Activated CD4-positive, alpha-beta T cell treated with anti-CD3 and anti-CD28 coated beads for 36 hours (primary cell): ENCODE measurements at regions of chr11 and their contacts with region 1.

Region 1: GRCh38 chr11:35040221-35040942 is 98.6 kb upstream of the CD44 start:
- DNase-seq: peak; percentile 78
- ATAC-seq: peak; percentile 86
- H3K4me3 Mint-ChIP-seq: peak overlapping the region; percentile 79
- H3K27ac Mint-ChIP-seq: peak overlapping the region; percentile 98
- H3K4me1 Mint-ChIP-seq: peaks cover 80% of the 10 kb centered on the region
- H3K27me3 Mint-ChIP-seq: peaks cover 2% of the 10 kb centered on the region

Region 2: DNA sequence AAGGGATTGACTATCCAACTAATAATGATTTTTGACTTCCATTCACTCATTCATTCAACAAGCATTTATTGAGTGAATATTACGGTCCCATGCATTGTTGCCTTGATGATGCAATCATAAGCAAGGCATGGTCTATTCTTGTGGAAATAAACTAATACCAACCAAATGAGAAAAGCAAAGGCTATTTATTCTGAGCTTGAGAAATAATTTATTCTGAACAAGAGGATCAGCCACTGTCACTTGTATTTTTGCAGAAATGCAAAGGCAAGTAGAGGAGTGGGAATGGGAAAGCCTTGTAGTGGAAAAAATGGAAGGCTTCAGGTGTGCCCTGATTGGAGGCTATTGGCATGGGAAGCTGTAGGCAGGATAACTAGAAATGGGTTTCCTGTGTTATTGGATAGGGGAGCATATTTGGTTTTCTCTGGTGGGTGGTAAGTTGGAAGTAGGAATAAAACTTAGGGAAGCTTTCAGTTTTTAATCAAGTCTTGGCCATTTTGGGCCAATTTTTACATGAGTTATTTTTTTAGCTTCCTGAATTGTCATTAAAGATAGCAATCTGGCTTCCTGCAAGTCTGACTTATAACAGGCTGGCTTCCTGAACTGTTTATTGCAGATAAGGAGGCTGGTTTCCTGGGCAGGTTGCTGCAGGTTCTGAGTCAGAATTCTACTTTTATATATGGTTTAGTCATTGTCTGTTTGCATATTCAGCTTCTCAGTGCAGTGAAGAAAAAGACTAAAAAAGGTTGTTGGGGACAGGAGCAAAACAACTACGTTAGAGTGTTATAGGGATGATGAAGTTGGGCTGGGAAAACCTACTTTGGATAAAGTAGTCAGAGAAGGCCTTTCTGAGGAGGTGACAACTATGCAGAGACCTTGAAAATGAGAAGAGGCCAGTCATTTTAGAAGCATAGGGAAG is 230.9 kb before region 1 on chr11:
- CTCF ChIA-PET with region 1: no interaction called
- POLR2A ChIA-PET with region 1: no interaction called
- intact Hi-C with region 1: no loop called
- DNase-seq: peak; percentile 10
- ATAC-seq: peak; percentile 33
- H3K4me3 Mint-ChIP-seq: no peak overlapping the region
- H3K27ac Mint-ChIP-seq: no peak overlapping the region
- H3K4me1 Mint-ChIP-seq: peaks cover 7% of the 10 kb centered on the region
- H3K27me3 Mint-ChIP-seq: peaks cover 37% of the 10 kb centered on the region

Region 3: DNA sequence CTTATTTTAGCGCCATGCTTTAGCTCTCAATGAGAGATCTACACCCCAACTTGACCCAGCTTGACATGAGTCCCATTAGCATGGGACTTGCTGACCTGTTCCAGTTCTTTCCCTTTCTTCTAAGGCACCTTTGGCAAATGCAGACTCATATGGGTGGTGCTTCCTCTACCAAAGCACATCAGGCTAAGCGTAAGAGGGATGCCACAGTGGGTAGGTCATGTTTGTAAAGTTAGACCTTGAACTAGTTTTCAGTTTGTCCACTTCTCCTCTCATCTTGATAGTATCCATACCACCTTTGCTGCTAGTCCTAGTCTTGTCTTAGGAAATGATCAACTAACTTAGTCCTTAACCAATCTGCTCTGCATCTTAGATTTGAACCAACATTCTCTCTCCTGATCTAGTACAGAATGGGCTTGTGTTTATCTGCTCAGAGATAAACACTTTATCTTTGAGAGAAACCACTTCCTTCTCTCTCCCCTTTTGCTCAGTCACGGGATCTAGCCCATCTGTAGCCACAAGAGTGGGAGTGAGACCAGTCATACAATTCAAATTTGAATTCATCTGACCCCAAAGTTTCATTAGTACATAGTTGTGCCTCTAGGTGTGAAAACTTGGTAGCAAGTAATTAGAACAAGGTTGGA is 26.5 kb after region 1 on chr11:
- CTCF ChIA-PET with region 1: interaction called, 3 read pairs
- POLR2A ChIA-PET with region 1: interaction called, 3 read pairs
- intact Hi-C with region 1: loop called in 1 of 2 experiments (anchors 2 kb)
- DNase-seq: peak; percentile 61
- ATAC-seq: peak; percentile 85
- H3K4me3 Mint-ChIP-seq: peak overlapping the region; percentile 15
- H3K27ac Mint-ChIP-seq: peak overlapping the region; percentile 73
- H3K4me1 Mint-ChIP-seq: peaks cover 32% of the 10 kb centered on the region
- H3K27me3 Mint-ChIP-seq: peaks cover 3% of the 10 kb centered on the region

Region 4: GRCh38 chr11:35126000-35126878 is 85.9 kb after region 1 on chr11:
- CTCF ChIA-PET with region 1: interaction called, 4 read pairs
- POLR2A ChIA-PET with region 1: no interaction called
- intact Hi-C with region 1: loop called in 1 of 2 experiments (anchors 1 kb)
- DNase-seq: peak; percentile 76
- ATAC-seq: peak; percentile 82
- H3K4me3 Mint-ChIP-seq: peak overlapping the region; percentile 58
- H3K27ac Mint-ChIP-seq: peak overlapping the region; percentile 92
- H3K4me1 Mint-ChIP-seq: peaks cover 69% of the 10 kb centered on the region
- H3K27me3 Mint-ChIP-seq: no peaks in the 10 kb centered on the region

Region 5: DNA sequence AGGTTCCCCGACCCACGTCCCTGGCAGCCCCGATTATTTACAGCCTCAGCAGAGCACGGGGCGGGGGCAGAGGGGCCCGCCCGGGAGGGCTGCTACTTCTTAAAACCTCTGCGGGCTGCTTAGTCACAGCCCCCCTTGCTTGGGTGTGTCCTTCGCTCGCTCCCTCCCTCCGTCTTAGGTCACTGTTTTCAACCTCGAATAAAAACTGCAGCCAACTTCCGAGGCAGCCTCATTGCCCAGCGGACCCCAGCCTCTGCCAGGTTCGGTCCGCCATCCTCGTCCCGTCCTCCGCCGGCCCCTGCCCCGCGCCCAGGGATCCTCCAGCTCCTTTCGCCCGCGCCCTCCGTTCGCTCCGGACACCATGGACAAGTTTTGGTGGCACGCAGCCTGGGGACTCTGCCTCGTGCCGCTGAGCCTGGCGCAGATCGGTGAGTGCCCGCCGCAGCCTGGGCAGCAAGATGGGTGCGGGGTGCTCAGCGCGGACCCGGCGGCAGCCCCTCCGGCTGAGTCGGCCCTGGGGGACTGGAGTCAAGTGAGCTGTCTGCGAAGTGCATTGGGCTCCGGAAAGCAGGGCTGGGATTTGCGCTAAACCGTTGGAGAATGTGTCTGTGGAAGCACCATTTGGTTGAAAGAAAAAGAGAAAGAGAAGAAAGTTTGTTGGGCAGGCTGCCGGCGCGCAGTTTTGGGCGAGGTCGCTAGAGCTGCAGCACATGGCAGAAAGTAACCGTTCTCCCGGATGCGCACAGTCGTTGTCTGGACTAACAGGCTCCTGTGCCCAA is 98.8 kb after region 1 on chr11 and contains the start of gene CD44:
- CTCF ChIA-PET with region 1: interaction called, 3 read pairs
- POLR2A ChIA-PET with region 1: interaction called, 10 read pairs
- intact Hi-C with region 1: loop called in 1 of 2 experiments (anchors 1 kb)
- DNase-seq: peak; percentile 83
- ATAC-seq: peak; percentile 67
- H3K4me3 Mint-ChIP-seq: peak within 1 kb of the TSS; percentile 83
- H3K27ac Mint-ChIP-seq: peak within 1 kb of the TSS; percentile 93
- H3K4me1 Mint-ChIP-seq: peaks cover 52% of the 10 kb centered on the region
- H3K27me3 Mint-ChIP-seq: no peaks in the 10 kb centered on the region
- total RNA-seq, gene CD44: 357 to 435 TPM

Region 6: DNA sequence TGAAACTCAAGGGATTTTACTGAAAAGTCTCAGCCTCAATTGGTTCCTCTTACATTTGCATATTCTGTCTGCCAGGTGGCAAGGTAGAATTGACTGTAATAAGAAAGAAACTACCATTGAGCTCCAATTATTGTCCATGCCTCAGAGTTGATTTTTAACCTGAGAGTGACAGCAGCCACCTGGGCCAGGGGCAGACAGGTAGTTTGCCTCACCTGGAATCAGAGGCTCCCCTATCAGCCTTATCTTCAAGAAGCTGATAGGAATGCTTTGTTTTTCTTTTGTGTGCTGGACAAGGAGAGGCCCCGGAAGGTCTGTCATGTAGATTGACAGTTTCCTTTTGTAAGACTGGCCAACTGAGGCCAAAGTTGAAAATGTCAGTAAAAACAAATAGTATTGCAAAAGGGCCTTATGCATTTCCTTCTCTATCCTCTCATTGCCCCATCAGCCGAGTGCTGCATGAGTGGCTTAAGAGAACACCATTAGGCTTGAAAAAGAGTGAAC is 132.7 kb after region 1 on chr11:
- CTCF ChIA-PET with region 1: interaction called, 4 read pairs
- POLR2A ChIA-PET with region 1: no interaction called
- intact Hi-C with region 1: loop called in 1 of 2 experiments (anchors 1 kb)
- DNase-seq: no peak
- ATAC-seq: no peak
- H3K4me3 Mint-ChIP-seq: no peak overlapping the region
- H3K27ac Mint-ChIP-seq: peak overlapping the region; percentile 83
- H3K4me1 Mint-ChIP-seq: peaks cover 97% of the 10 kb centered on the region
- H3K27me3 Mint-ChIP-seq: no peaks in the 10 kb centered on the region